PC-9 (cell line): ENCODE measurements at regions of chr11 and their contacts with region 1.

Region 1: DNA sequence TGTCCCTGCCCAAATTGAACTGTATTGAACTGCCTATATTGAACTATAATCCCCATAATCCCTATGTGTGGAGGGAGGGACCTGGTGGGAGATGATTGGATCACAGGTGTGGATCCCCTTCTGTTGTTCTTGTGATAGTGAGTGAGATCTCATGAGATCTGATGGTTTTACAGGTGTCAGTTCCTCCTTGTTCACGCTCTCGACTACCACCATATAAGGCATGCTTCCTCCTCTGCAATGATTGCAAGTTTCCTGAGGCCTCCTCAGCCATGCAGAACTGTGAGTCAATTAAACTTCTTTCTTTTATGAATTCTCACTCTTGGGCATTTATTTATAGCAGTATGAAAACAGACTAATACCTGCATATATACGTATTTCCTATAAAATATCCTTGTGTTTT is 206.5 kb upstream of the PDGFD start:
- DNase-seq: no peak
- H3K4me3 ChIP-seq: no peak overlapping the region
- H3K27ac ChIP-seq: no peak overlapping the region
- H3K4me1 ChIP-seq: no peaks in the 10 kb centered on the region
- H3K27me3 ChIP-seq: no peaks in the 10 kb centered on the region
- CTCF ChIP-seq: no peak

Region 2: DNA sequence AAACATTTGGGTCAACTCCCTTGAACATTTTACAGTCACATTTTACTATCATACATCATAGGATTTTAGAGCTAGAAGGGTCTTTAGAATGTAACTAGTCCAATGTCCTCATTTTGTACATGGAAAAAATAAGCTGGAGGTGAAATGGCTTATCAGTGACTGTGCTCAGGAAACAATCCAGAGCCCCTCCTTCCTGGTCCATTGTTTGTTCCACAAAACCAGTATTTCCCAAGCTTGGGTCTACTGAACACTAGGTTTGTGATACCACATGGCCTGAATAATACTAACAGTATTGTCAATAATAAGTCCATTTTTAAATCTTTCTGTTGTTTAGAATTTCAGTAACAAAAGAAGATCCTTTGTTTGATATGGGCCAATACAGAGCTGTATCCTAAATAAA is 233.6 kb before region 1 on chr11:
- CTCF ChIA-PET with region 1: no interaction called
- POLR2A ChIA-PET with region 1: interaction called, 17 read pairs
- intact Hi-C with region 1: no loop called
- DNase-seq: peak in 1 of 2 experiments; percentile 19
- H3K4me3 ChIP-seq: no peak overlapping the region
- H3K27ac ChIP-seq: no peak overlapping the region
- H3K4me1 ChIP-seq: peaks cover 12% of the 10 kb centered on the region
- H3K27me3 ChIP-seq: no peaks in the 10 kb centered on the region
- CTCF ChIP-seq: no peak

Region 3: GRCh38 chr11:104534278-104534677 is 163.8 kb after region 1 on chr11:
- CTCF ChIA-PET with region 1: no interaction called
- POLR2A ChIA-PET with region 1: no interaction called
- intact Hi-C with region 1: no loop called
- DNase-seq: peak in 1 of 2 experiments; percentile 31
- H3K4me3 ChIP-seq: no peak overlapping the region
- H3K27ac ChIP-seq: no peak overlapping the region
- H3K4me1 ChIP-seq: peaks cover 15% of the 10 kb centered on the region
- H3K27me3 ChIP-seq: no peaks in the 10 kb centered on the region
- CTCF ChIP-seq: no peak